Endothelial cell of umbilical vein (primary cell): ENCODE measurements at regions of chr1 and their contacts with region 1.

Region 1: GRCh38 chr1:223741871-223742270 is 29.5 kb downstream of the CAPN2 start:
- DNase-seq: peak; percentile 72
- H3K4me3 ChIP-seq: no peak overlapping the region
- H3K27ac ChIP-seq: peak overlapping the region; percentile 63
- H3K4me1 ChIP-seq: peaks cover 42% of the 10 kb centered on the region
- H3K27me3 ChIP-seq: no peaks in the 10 kb centered on the region
- CTCF ChIP-seq: no peak
- POLR2A ChIP-seq: no peak

Region 2: GRCh38 chr1:223726380-223727001 is 15.4 kb before region 1 on chr1:
- CTCF ChIA-PET with region 1: interaction called, 11 read pairs
- POLR2A ChIA-PET with region 1: interaction called, 8 read pairs
- dilution Hi-C with region 1: no loop called
- intact Hi-C with region 1: loop called (anchors 2 kb)
- DNase-seq: peak; percentile 96
- H3K4me3 ChIP-seq: no peak overlapping the region
- H3K27ac ChIP-seq: peak overlapping the region; percentile 80
- H3K4me1 ChIP-seq: peaks cover 38% of the 10 kb centered on the region
- H3K27me3 ChIP-seq: no peaks in the 10 kb centered on the region
- CTCF ChIP-seq: no peak
- POLR2A ChIP-seq: no peak

Region 3: DNA sequence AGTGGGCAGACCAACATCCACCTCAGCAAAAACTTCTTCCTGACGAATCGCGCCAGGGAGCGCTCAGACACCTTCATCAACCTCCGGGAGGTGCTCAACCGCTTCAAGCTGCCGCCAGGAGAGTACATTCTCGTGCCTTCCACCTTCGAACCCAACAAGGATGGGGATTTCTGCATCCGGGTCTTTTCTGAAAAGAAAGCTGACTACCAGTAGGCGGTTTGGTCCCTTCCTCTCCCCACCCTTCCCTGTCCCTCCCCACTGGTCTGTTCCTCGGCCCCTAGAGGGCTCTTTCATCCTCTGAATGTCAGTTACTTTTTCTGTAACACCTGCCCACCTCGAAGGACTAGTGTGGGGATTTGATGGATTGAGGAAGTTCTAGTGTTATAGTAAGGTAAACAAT is 17.4 kb after region 1 on chr1:
- CTCF ChIA-PET with region 1: no interaction called
- POLR2A ChIA-PET with region 1: no interaction called
- dilution Hi-C with region 1: no loop called
- intact Hi-C with region 1: no loop called
- DNase-seq: no peak
- H3K4me3 ChIP-seq: no peak overlapping the region
- H3K27ac ChIP-seq: no peak overlapping the region
- H3K4me1 ChIP-seq: no peaks in the 10 kb centered on the region
- H3K27me3 ChIP-seq: no peaks in the 10 kb centered on the region
- CTCF ChIP-seq: no peak
- POLR2A ChIP-seq: no peak

Region 4: DNA sequence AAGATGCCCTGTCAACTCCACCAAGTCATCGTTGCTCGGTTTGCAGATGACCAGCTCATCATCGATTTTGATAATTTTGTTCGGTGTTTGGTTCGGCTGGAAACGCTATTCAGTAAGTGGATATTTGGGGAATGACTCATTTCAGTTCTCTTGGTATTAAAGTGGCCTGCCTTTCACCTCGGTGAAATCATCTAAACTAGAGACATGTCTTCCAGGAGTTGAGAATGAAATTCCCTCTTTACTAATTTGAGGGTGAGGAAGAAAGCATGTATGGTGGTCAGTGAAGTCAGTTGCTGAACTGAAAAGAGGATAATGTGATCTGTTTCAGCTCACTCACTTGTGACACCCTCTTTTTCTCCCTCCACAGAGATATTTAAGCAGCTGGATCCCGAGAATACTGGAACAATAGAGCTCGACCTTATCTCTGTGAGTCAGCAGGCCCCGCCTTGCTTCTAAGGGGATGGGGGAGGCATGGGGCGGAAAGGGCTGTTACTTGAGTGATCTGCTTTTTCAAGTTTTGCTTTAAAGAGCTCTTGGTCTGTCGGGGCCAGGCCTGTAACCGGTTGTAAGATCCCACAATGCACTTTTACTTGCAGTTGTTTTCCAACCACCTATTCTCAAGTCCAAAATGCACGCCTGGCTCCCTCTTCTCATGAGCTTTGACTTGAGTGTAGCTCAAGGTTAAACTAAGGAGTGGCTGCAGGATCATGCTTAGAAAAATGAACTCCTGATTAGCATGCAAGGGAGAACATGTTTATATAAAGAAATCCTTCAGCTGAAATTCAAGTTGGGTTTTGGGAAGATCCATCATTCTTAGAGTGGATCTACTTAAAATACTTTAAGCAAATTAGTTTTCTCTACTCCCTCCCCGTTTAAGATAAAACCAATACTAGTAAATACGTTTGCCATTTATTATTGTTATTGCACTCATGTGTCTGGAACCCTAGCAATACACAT is 30.2 kb after region 1 on chr1:
- CTCF ChIA-PET with region 1: interaction called, 4 read pairs
- POLR2A ChIA-PET with region 1: interaction called, 3 read pairs
- dilution Hi-C with region 1: no loop called
- intact Hi-C with region 1: loop called (anchors 1 kb)
- DNase-seq: peak; percentile 95
- H3K4me3 ChIP-seq: peak overlapping the region in 1 of 3 experiments; percentile 2
- H3K27ac ChIP-seq: peak overlapping the region; percentile 78
- H3K4me1 ChIP-seq: peaks cover 68% of the 10 kb centered on the region
- H3K27me3 ChIP-seq: no peaks in the 10 kb centered on the region
- CTCF ChIP-seq: no peak
- POLR2A ChIP-seq: no peak

Region 5: GRCh38 chr1:223788746-223789415 is 47.0 kb after region 1 on chr1:
- CTCF ChIA-PET with region 1: no interaction called
- POLR2A ChIA-PET with region 1: no interaction called
- dilution Hi-C with region 1: no loop called
- intact Hi-C with region 1: no loop called
- DNase-seq: no peak
- H3K4me3 ChIP-seq: no peak overlapping the region
- H3K27ac ChIP-seq: no peak overlapping the region
- H3K4me1 ChIP-seq: peaks cover 5% of the 10 kb centered on the region
- H3K27me3 ChIP-seq: no peaks in the 10 kb centered on the region
- CTCF ChIP-seq: no peak
- POLR2A ChIP-seq: no peak